AG04450 (cell line): ENCODE measurements at regions of chr12 and their contacts with region 1.

Region 1: DNA sequence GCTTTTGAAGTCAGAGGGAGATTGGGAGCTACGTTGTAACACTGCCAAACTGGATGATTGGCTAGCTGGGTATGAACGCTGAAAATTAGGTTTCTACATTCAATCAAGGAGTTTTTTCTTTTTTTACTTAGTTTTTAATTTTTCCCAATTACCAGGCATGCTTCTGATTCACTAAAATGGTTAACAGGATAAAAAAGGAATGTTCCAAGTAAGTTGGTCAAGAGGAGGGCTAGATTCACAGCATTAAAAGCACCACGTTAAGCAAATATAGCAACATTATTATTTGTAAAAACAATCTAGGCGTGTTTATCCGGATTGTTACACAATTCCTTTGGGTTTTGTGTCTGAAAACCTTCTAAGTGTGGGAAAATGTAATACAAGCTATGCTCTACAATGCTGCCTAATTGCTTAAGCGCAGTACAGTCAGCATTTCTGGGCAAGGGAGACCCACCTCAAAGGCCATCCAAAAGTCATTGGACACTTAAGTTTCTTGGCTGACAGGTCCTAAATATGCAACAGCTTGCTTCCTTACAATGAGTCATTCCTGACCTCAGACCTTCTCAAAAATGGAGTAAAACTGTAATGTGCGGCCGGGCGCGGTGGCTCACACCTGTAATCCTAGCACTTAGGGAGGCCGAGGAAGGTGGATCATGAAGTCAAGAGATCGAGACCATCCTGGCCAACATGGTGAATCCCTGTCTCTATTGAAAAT is 1.2 kb downstream of the RPLP0 start:
- DNase-seq: peak; percentile 16
- H3K4me3 ChIP-seq: peak overlapping the region; percentile 75
- H3K27ac ChIP-seq: peak overlapping the region; percentile 75
- H3K27me3 ChIP-seq: no peaks in the 10 kb centered on the region
- CTCF ChIP-seq: no peak

Region 2: GRCh38 chr12:120116792-120117651 is 82.7 kb before region 1 on chr12:
- CTCF ChIA-PET with region 1: interaction called, 10 read pairs
- POLR2A ChIA-PET with region 1: interaction called, 34 read pairs
- DNase-seq: peak; percentile 74
- H3K4me3 ChIP-seq: peak overlapping the region; percentile 97
- H3K27ac ChIP-seq: peak overlapping the region; percentile 93
- H3K27me3 ChIP-seq: no peaks in the 10 kb centered on the region
- CTCF ChIP-seq: no peak

Region 3: DNA sequence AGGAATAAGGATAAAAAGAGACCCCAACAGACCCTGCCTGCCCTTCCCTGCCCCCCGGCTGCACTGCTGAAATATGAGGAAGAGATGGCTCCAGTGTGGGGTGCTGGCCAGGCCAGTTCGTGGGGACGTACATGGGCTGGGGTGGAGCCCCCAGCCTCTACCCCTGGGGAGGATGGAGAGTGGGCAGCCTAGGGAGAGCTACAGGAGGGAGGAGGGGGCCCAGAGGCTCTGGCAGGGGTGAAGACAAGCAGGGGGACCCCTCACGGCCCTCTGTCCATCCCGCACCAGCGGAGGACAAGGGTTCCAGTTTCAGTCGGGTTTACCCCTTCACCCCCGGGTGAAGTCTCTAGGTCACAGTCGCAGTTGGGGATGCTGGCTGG is 12.1 kb after region 1 on chr12:
- CTCF ChIA-PET with region 1: interaction called, 7 read pairs
- POLR2A ChIA-PET with region 1: interaction called, 24 read pairs
- DNase-seq: no peak
- H3K4me3 ChIP-seq: no peak overlapping the region
- H3K27ac ChIP-seq: no peak overlapping the region
- H3K27me3 ChIP-seq: no peaks in the 10 kb centered on the region
- CTCF ChIP-seq: no peak

Region 4: GRCh38 chr12:120234643-120235368 is 35.1 kb after region 1 on chr12:
- CTCF ChIA-PET with region 1: interaction called, 23 read pairs
- POLR2A ChIA-PET with region 1: interaction called, 136 read pairs
- DNase-seq: peak; percentile 70
- H3K4me3 ChIP-seq: peak overlapping the region; percentile 27; the same call in 1 of the 2 replicates
- H3K27ac ChIP-seq: peak overlapping the region; percentile 96
- H3K27me3 ChIP-seq: no peaks in the 10 kb centered on the region
- CTCF ChIP-seq: peak; percentile 57

Region 5: DNA sequence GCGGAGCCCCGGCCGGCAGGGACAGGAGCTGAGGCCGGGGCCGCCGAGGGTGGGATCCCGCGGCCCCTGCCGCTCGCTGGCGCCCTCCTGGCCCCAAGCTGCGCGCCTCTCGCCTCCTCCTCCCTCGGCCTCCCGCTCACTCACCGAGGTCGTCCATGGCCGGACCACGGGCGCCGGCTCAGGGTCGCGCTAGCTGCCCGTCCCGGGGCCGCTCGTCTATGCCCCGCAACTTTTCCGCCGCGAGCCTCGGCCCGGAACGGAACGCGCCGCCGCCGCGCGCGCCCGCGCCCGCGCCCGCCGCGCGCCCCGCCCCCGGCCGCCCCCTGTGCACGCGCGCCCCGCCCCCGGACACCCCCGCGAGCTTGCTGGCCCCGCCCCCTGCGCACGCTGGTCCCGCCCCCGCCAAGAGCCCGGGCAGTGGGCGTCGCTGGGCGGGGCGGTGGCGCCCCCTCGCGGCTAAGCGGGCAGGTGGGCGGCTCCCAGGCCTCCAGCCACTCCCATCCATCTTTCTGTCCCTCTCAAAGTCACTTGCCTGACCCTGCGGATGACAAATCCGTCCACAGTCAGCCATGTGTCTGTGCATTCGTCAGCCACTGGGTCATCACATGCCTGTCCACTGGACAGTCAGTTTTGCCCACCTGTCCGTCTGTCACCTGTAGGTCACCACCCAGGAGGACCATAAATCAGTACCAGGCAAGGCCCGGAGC is 65.9 kb after region 1 on chr12 and contains the start of gene PXN:
- CTCF ChIA-PET with region 1: interaction called, 62 read pairs
- POLR2A ChIA-PET with region 1: interaction called, 80 read pairs
- DNase-seq: no peak
- H3K4me3 ChIP-seq: peak within 1 kb of the TSS; percentile 77
- H3K27ac ChIP-seq: peak within 1 kb of the TSS; percentile 21
- H3K27me3 ChIP-seq: no peaks in the 10 kb centered on the region
- CTCF ChIP-seq: peak; percentile 66
- polyA plus RNA-seq, gene PXN: 35.0 and 48.1 TPM in 2 replicates

Region 6: DNA sequence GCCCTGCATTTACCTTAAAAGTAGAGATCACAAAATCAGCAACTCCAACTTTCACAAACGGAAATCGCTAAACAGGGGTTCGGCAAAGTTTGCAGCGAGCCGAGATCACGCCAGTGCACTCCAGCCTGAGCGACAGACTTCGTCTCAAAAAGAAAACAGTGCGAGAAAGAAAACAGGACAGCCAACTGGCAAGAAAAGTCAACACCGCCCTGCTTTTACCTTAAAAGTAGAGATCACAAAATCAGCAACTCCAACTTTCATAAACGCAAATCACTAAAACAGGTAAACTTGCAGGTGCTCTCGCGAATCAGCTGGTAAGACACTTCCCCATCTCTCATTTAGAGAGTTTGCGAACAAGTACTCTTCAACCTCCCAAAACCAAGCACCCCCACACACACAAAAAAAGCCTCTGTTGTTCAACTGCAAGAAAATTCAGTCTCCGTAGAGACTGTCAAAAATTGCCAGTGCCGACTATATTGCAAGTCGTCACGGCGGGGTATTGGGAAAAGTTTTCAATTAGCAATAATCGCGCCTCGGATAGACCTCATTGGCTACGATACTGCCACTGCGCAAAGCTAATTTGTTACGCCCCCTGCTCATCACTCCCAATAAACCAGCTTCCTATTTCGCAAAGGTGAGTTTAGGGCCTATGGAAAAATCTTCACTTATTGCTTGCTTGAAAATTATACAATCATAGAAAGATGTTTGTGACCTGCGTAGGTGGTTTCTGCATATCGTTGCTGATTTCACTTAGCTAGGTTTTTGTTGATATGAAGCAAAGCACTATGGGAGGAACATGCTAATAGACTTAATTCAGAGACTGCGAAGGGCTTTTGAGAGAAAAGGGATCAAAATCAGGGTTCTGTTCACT is 93.1 kb after region 1 on chr12 and contains the start of gene RNU4-1:
- CTCF ChIA-PET with region 1: interaction called, 17 read pairs
- POLR2A ChIA-PET with region 1: interaction called, 149 read pairs
- DNase-seq: peak; percentile 95
- H3K4me3 ChIP-seq: peak within 1 kb of the TSS; percentile 62
- H3K27ac ChIP-seq: peak within 1 kb of the TSS; percentile 100
- H3K27me3 ChIP-seq: no peaks in the 10 kb centered on the region
- CTCF ChIP-seq: no peak
- polyA plus RNA-seq, gene RNU4-1: under 0.01 TPM in 1 of 2 replicates, not detected in the other

Region 7: DNA sequence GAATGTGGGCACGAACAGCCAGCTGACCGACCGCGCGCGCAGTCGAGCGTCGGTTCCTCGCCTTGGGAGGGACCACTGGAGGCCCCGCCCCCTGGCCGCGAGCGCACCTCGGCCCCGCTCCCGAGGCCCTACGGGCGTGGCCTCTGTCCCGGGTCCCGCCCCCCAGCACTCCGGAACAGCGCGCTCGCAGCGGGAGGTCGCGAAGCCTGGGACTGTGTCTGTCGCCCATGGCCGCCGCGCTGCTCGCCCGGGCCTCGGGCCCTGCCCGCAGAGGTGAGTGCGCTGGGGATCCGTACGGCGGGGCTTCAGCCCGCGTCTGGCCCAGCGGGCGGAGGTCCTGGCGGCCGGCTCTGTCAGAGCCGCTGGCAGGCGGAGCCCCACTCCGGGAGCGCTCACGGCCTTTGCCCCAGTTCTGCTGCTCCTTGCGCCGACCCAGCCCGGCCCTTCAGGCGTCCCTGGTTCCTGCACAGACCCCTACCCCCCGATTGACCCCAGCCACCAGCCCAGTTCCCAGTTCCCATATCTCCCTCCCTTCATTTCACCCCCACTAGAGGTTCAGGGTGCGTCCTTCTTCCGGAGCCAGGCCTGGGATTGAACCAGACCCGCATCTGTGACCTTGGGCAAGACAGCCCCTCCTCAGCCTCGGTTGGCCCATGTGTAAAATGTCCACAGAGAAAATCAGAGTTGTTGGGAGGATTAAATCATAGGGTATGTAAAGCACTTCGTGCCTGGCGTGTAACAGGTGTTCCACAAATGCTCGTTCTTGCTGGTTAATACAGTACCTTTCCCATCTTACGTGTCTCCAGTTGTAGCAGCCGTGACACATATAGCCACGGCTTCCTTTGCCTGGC is 526.1 kb after region 1 on chr12 and contains the start of gene ACADS:
- CTCF ChIA-PET with region 1: no interaction called
- POLR2A ChIA-PET with region 1: no interaction called
- DNase-seq: peak; percentile 34
- H3K4me3 ChIP-seq: peak within 1 kb of the TSS; percentile 70
- H3K27ac ChIP-seq: peak within 1 kb of the TSS; percentile 39
- H3K27me3 ChIP-seq: no peaks in the 10 kb centered on the region
- CTCF ChIP-seq: no peak
- polyA plus RNA-seq, gene ACADS: 4.0 and 5.5 TPM in 2 replicates